OCI-LY7 (cell line): ENCODE measurements at regions of chr7 and their contacts with region 1.

Region 1: DNA sequence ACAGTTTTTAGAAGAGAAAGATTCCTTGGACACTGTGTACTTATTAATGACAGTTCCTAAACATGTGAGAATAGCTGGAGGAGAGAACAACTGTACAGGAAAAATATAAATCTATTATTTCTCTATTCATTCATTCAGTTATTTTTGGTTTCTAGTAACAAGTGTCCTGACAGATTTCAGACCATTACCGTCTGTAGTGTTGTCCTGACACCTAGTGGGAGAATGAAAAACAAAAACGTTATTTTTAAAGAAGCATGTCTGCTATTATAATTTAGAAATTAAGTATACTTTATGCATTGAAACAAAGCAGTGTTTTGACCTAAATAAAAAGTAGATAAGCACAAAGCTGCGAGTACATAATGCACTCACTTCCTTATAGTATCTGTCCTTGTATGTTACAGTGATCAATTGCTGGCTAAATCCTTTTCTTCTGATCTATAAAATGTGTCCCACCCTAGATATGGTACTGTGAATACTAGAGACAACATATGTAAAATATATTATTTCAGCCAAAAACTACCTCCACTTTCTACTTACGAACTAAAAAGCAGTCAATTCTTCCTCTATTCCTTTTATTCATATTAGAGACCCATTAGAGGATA is 575.6 kb downstream of the ARL4A start:
- DNase-seq: peak; percentile 26
- H3K4me3 ChIP-seq: no peak overlapping the region
- H3K27ac ChIP-seq: no peak overlapping the region
- H3K4me1 ChIP-seq: no peaks in the 10 kb centered on the region
- CTCF ChIP-seq: peak; percentile 74

Region 2: GRCh38 chr7:12524794-12525386 is 738.1 kb before region 1 on chr7:
- CTCF ChIA-PET with region 1: no interaction called
- POLR2A ChIA-PET with region 1: no interaction called
- intact Hi-C with region 1: loop called (anchors 2 kb)
- DNase-seq: peak; percentile 33
- H3K4me3 ChIP-seq: no peak overlapping the region
- H3K27ac ChIP-seq: no peak overlapping the region
- H3K4me1 ChIP-seq: no peaks in the 10 kb centered on the region
- CTCF ChIP-seq: peak; percentile 80

Region 3: DNA sequence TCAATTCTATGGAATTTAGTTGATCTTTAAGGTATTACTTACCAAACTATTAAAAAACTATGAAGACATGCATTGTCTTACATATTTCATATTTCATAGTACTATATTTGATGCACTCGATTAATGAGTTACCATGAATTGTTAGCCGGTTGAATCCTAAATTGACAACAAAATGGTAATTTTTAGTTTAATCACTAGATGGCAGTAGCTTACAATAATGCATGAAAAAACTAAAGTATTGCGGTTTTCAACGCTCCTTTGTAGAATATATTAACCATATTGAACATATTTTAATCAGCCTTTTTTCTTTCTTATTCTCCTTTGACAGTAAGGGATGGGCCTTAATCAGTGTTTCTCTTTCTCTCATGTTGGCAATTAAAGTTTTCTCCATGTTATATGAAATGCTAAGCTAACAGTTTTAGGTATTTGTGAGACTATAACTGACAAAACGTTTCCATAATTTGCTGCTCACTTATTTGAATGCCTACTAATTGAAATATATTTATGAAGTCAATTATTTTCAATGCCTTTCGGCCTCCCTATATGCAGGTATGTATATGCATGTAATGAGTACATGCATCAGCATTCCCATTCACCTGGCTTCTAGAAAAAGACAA is 624.1 kb before region 1 on chr7:
- CTCF ChIA-PET with region 1: no interaction called
- POLR2A ChIA-PET with region 1: no interaction called
- intact Hi-C with region 1: loop called (anchors 2 kb)
- DNase-seq: peak; percentile 53
- H3K4me3 ChIP-seq: no peak overlapping the region
- H3K27ac ChIP-seq: no peak overlapping the region
- H3K4me1 ChIP-seq: no peaks in the 10 kb centered on the region
- CTCF ChIP-seq: peak; percentile 85

Region 4: DNA sequence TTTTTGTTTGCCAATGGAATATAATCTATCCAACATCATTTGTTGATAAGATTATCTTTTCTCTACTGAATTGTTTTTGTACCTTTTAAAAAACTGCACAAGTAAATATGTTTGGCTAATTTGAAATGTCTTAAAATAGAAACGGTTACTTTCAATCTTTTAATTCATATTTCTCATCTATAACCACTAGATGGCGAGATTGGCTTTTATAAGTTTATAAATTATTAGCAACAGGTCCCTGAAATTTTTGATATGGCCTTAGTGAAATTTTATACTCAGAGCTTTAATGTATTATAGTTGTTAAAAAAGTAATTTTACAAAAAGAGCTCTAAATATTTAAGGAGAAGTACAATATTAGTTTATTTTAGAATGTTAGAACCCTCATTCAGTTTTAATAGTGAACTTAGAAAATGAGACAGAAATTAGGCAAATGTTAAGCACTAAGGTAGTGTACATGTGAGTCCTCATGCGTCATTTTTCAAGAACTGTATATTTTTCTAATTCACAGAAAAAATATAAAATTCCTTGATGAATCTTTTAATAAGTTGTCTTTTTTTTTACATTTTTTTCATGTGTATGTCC is 16.9 kb after region 1 on chr7:
- CTCF ChIA-PET with region 1: no interaction called
- POLR2A ChIA-PET with region 1: no interaction called
- intact Hi-C with region 1: no loop called
- DNase-seq: peak; percentile 56
- H3K4me3 ChIP-seq: no peak overlapping the region
- H3K27ac ChIP-seq: no peak overlapping the region
- H3K4me1 ChIP-seq: no peaks in the 10 kb centered on the region
- CTCF ChIP-seq: peak; percentile 84